HepG2 (cell line): ENCODE measurements at regions of chr3 and their contacts with region 1.

Region 1: DNA sequence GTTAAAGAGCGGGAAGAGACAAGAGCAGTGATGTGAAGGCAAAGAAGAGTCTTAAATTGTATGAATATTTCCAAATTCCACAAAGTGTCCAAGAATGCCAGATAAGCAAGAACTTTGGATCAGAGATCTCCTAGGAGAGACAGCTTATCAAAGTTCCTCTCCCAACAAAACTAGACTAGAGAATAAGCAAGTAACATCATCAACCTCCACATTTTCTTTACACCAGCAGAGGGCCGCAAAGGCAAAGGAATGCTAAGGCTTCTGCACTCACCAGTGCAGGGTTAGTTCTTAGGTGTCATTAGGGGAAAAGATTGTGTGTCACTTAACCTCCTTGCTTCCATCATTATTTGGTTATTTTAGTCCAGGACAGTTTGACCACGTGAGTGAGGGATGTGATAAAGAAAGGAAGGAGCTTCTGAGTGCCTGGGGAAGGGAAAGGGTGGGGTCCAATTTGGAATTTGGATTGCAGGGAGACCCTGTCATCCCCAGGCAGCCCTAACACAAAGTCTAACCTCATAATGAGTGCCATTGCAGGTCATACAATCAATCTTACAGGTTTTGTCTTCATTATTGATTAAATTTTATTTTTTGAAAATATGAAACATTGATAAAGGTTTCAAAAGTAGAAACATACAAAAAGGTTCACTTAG is 7.5 kb upstream of the CMTM6 start:
- DNase-seq: peak; percentile 71
- ATAC-seq: peak; percentile 98
- H3K4me3 ChIP-seq: no peak overlapping the region
- H3K27ac ChIP-seq: no peak overlapping the region
- H3K4me1 ChIP-seq: peaks cover 9% of the 10 kb centered on the region
- H3K27me3 ChIP-seq: peaks cover 0 to 1% of the 10 kb centered on the region in 2 experiments; a peak in 1 of 5 replicates
- CTCF ChIP-seq: peak; percentile 92
- EP300 ChIP-seq: no peak
- POLR2A ChIP-seq: no peak
- RAD21 ChIP-seq: peak; percentile 88

Region 2: DNA sequence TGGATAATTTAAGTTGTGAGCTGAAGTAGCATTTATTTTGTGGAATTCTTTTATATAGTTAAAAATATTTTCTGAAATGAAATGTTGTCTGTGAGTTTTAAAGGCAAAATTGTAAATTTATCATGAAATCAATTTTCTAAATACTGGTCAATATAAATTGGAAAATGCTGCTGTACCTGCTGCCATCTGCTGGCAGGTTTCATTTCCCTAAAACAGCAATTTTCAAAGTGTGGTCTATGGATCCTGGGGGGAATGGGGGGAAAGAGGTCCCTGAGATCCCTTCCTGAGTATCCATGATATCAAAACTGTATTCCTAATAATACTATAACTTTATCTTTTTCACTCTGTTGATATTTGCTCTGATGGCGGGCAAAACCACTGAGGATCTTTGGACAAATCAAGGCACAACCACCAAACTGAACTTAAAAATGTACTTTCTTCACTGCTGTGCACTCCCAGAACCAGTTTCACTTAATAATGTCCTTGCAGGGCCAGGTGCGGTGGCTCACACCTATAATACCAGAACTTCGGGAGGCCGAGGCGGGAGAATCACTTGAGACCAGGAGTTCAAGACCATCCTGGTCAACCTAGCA is 424.0 kb after region 1 on chr3:
- CTCF ChIA-PET with region 1: no interaction called
- POLR2A ChIA-PET with region 1: no interaction called
- in situ Hi-C with region 1: loop called (anchors 10 kb)
- intact Hi-C with region 1: loop called (anchors 1 kb)
- DNase-seq: no peak
- ATAC-seq: peak; percentile 55; the same call in 2 of the 3 replicates
- H3K4me3 ChIP-seq: no peak overlapping the region
- H3K27ac ChIP-seq: no peak overlapping the region
- H3K4me1 ChIP-seq: peaks cover 11% of the 10 kb centered on the region
- H3K27me3 ChIP-seq: no peaks in the 10 kb centered on the region; a peak in 1 of 5 replicates
- CTCF ChIP-seq: peak; percentile 72
- EP300 ChIP-seq: no peak
- POLR2A ChIP-seq: no peak
- RAD21 ChIP-seq: peak; percentile 34; the same call in 1 of the 2 replicates